ENCODE measurements at regions of chr22 and their contacts with region 1.

Region 1: GRCh38 chr22:38953577-38954413 is 3.6 kb upstream of the APOBEC3A start:
- DNase-seq: no peak
- ATAC-seq: no peak
- H3K4me3 ChIP-seq: no peak overlapping the region
- H3K27ac ChIP-seq: no peak overlapping the region
- H3K4me1 ChIP-seq: no peaks in the 10 kb centered on the region
- H3K27me3 ChIP-seq: peaks cover 0 to 4% (median 2%) of the 10 kb centered on the region in 3 donors
- CTCF ChIP-seq: no peak

Region 2: GRCh38 chr22:38996105-38996504 is 42.3 kb after region 1 on chr22:
- intact Hi-C with region 1: loop called in 1 of 2 experiments (anchors 5 kb)
- DNase-seq: no peak
- ATAC-seq: no peak
- H3K4me3 ChIP-seq: no peak overlapping the region
- H3K27ac ChIP-seq: no peak overlapping the region
- H3K4me1 ChIP-seq: no peaks in the 10 kb centered on the region
- H3K27me3 ChIP-seq: peaks cover 0 to 38% (median 9%) of the 10 kb centered on the region in 3 donors
- CTCF ChIP-seq: no peak

Region 3: DNA sequence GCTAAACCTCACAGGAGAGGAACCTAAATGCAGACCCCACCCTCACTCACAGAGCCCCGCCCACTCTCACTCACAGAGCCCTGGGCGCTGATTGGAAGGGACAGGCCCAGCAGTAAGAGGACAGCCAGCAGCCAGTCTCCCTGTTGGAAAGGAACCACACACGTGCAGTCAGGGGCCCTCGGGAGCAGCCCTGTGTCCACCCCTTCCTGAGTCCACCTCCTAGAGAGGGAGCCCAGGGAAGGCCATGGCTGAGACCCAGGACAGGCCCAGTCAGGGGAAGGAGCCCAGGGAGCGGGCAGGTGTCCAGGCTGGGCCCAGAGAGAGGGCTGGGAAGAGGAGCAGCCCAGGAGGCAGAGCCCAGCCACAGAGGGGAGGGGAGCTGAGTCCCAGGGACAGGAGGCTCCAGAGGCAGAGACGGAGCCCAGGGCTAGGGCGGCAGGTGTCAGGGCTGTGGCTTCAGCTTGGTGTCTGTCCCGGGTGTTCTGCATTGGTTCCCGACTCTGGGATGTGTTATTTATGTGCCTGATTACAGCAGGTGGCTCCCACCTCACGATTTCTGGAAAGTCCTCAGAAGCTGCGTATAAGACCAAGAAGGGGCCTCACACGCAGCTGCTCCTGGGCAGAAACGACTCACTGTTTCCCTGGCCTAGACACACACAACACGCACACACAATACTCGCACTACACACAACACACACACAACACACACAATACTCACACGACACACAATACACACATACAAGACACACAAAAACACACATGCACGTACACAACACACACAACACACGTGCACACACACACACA is 134.3 kb after region 1 on chr22:
- intact Hi-C with region 1: loop called in 1 of 2 experiments (anchors 10 kb)
- DNase-seq: peak in 1 of 2 donors; percentile 54
- ATAC-seq: peak in 2 of 4 donors; percentile 26 to 29
- H3K4me3 ChIP-seq: no peak overlapping the region
- H3K27ac ChIP-seq: no peak overlapping the region
- H3K4me1 ChIP-seq: no peaks in the 10 kb centered on the region
- H3K27me3 ChIP-seq: peaks cover 0 to 15% (median 0%) of the 10 kb centered on the region in 3 donors
- CTCF ChIP-seq: no peak

Region 4: DNA sequence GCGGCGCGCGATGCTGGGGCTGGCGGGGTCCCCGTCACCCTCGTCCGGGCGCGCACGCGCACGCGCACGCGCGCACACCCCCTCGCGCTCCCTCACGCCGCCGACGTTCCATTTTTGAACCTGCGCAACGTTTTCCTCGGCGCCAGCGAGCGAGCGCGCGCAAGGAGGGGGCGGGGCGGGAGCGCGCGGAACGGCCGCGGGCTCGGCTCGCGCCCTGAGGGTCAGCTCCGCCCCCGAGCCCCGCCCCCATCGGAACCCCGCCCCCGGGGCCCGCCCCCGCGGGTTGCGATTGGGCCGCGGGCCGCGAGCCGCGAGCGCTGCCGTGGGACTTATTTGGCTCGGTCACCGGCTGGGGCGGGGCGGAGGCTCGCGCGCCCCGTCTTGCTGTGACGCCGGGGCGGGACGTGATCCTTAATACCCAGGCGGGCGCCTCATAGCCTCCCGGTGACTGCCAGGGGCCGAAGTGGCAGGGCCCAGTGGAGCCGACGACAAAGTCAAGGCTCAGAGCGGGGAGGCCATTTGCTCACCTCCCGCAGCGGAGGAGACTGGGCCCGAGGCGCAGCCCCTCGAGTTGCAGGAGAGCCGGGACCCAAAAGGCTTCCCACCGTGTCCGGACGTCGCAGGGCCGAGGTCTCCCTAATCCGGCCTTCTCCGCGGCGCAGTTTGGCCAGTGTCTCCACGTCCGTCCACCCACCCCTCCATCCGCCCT is 198.9 kb after region 1 on chr22 and contains the start of gene CBX7:
- intact Hi-C with region 1: no loop called
- DNase-seq: peak; percentile 96 to 97
- ATAC-seq: peak; percentile 93 to 95 (median 94)
- H3K4me3 ChIP-seq: peak within 1 kb of the TSS; percentile 94
- H3K27ac ChIP-seq: peak within 1 kb of the TSS; percentile 94
- H3K4me1 ChIP-seq: peaks cover 43% of the 10 kb centered on the region
- H3K27me3 ChIP-seq: no peaks in the 10 kb centered on the region
- CTCF ChIP-seq: no peak
- total RNA-seq, gene CBX7: 38.0 to 46.8 (median 39.2) TPM

Region 5: DNA sequence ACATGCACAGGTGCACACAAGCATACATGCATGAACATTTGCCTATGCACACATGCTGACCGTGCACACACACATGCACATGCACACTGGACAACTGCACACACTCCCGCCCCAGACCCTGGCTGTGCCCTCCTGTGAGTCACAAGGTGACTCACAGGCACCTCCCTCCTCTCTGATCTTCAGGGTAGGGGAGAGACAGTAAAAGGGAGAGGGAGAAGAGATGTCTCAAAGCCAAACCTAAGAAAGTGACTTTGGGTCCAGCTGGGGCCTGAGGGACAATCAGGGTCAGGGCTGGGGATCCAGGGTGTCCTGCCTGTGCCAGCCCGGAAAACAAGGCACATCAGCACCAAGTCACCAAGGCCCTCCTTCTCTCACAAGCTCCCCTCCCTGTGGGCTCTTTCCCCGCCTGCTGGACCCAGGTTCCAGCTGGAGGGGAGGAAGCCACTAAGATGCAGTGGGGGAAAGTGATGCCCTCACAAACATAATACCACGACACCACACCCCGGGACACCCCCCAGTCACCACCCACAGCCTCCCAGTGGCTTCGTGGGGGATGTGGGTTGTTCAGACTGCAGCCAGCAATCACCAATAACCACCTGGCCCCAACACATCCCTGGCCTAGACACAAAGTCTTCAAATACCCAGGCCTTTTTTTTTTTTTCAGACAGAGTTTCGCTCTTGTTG is 251.7 kb after region 1 on chr22:
- intact Hi-C with region 1: no loop called
- DNase-seq: no peak
- ATAC-seq: peak; percentile 56 to 79 (median 67)
- H3K4me3 ChIP-seq: no peak overlapping the region
- H3K27ac ChIP-seq: no peak overlapping the region
- H3K4me1 ChIP-seq: no peaks in the 10 kb centered on the region
- H3K27me3 ChIP-seq: no peaks in the 10 kb centered on the region
- CTCF ChIP-seq: no peak